CD8-positive, alpha-beta T cell (primary cell): ENCODE measurements at regions of chr2 and their contacts with region 1.

Region 1: GRCh38 chr2:227238238-227239237 is 74.1 kb downstream of the COL4A3 start:
- DNase-seq: peak; percentile 7 to 70 (median 56)
- ATAC-seq: no peak
- H3K4me3 ChIP-seq: no peak overlapping the region
- H3K4me3 Mint-ChIP-seq: no peak overlapping the region
- H3K27ac ChIP-seq: no peak overlapping the region
- H3K27ac Mint-ChIP-seq: no peak overlapping the region
- H3K4me1 ChIP-seq: no peaks in the 10 kb centered on the region
- H3K4me1 Mint-ChIP-seq: no peaks in the 10 kb centered on the region
- H3K27me3 ChIP-seq: no peaks in the 10 kb centered on the region
- H3K27me3 Mint-ChIP-seq: peaks cover 11% of the 10 kb centered on the region
- CTCF ChIP-seq: peak; percentile 98

Region 2: GRCh38 chr2:226215902-226216503 is 1022.5 kb before region 1 on chr2:
- CTCF ChIA-PET with region 1: interaction called, 3 read pairs
- POLR2A ChIA-PET with region 1: no interaction called
- intact Hi-C with region 1: loop called in 1 of 2 experiments (anchors 5 kb)
- DNase-seq: peak; percentile 22 to 62 (median 47)
- ATAC-seq: peak; percentile 62
- H3K4me3 ChIP-seq: no peak overlapping the region
- H3K4me3 Mint-ChIP-seq: no peak overlapping the region
- H3K27ac ChIP-seq: no peak overlapping the region
- H3K27ac Mint-ChIP-seq: no peak overlapping the region
- H3K4me1 ChIP-seq: no peaks in the 10 kb centered on the region
- H3K4me1 Mint-ChIP-seq: no peaks in the 10 kb centered on the region
- H3K27me3 ChIP-seq: no peaks in the 10 kb centered on the region
- H3K27me3 Mint-ChIP-seq: peaks cover 3% of the 10 kb centered on the region
- CTCF ChIP-seq: peak; percentile 53

Region 3: DNA sequence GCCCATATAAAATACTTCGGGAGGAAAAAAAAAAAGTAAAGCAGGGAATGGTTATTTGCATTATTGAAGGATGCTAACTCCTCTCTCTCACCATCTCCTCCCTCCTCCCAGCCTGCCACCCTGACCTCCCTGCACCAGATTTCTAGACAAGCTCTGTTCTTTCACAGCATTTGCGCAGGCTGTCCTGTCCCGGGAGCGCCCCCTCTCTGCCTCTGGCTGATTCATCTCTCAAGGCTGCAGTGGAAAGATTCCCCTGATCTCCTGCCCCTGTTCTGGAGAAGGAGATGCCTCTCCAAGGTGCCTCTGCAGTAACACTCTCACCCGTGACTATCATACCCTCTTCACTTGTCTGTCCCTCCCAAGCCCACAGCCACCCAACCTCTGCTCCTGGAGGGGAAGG is 113.0 kb before region 1 on chr2:
- CTCF ChIA-PET with region 1: no interaction called
- POLR2A ChIA-PET with region 1: no interaction called
- intact Hi-C with region 1: loop called (anchors 2 to 5 kb)
- DNase-seq: no peak
- ATAC-seq: no peak
- H3K4me3 ChIP-seq: no peak overlapping the region
- H3K4me3 Mint-ChIP-seq: no peak overlapping the region
- H3K27ac ChIP-seq: no peak overlapping the region
- H3K27ac Mint-ChIP-seq: no peak overlapping the region
- H3K4me1 ChIP-seq: no peaks in the 10 kb centered on the region
- H3K4me1 Mint-ChIP-seq: no peaks in the 10 kb centered on the region
- H3K27me3 ChIP-seq: no peaks in the 10 kb centered on the region
- H3K27me3 Mint-ChIP-seq: peaks cover 16% of the 10 kb centered on the region
- CTCF ChIP-seq: no peak

Region 4: GRCh38 chr2:227228061-227228667 is 10.4 kb before region 1 on chr2:
- CTCF ChIA-PET with region 1: interaction called, 18 read pairs
- POLR2A ChIA-PET with region 1: no interaction called
- intact Hi-C with region 1: no loop called
- DNase-seq: no peak
- ATAC-seq: no peak
- H3K4me3 ChIP-seq: no peak overlapping the region
- H3K4me3 Mint-ChIP-seq: no peak overlapping the region
- H3K27ac ChIP-seq: no peak overlapping the region
- H3K27ac Mint-ChIP-seq: no peak overlapping the region
- H3K4me1 ChIP-seq: no peaks in the 10 kb centered on the region
- H3K4me1 Mint-ChIP-seq: no peaks in the 10 kb centered on the region
- H3K27me3 ChIP-seq: no peaks in the 10 kb centered on the region
- H3K27me3 Mint-ChIP-seq: peaks cover 24% of the 10 kb centered on the region
- CTCF ChIP-seq: no peak

Region 5: DNA sequence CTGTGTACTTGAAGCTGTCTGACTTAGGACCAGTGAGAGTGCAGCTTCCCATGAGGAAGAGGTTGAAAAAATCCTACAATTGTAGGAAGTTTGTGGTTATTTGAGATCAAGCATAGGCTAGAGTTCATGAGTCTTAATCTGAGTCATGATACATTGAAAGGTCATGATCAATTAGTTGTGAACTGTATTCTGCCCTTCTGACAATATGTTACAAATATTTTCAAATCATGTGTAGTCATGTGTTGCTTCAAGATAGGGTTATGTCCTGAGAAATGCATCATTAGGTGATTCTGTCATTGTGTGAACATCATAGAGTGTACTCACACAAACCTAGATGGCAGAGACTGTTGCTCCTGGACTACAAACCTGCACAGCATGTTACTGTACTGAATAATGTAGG is 18.1 kb after region 1 on chr2:
- CTCF ChIA-PET with region 1: interaction called, 46 read pairs
- POLR2A ChIA-PET with region 1: no interaction called
- intact Hi-C with region 1: no loop called
- DNase-seq: no peak
- ATAC-seq: no peak
- H3K4me3 ChIP-seq: no peak overlapping the region
- H3K4me3 Mint-ChIP-seq: no peak overlapping the region
- H3K27ac ChIP-seq: no peak overlapping the region
- H3K27ac Mint-ChIP-seq: no peak overlapping the region
- H3K4me1 ChIP-seq: no peaks in the 10 kb centered on the region
- H3K4me1 Mint-ChIP-seq: no peaks in the 10 kb centered on the region
- H3K27me3 ChIP-seq: no peaks in the 10 kb centered on the region
- H3K27me3 Mint-ChIP-seq: peaks cover 2% of the 10 kb centered on the region
- CTCF ChIP-seq: no peak

Region 6: DNA sequence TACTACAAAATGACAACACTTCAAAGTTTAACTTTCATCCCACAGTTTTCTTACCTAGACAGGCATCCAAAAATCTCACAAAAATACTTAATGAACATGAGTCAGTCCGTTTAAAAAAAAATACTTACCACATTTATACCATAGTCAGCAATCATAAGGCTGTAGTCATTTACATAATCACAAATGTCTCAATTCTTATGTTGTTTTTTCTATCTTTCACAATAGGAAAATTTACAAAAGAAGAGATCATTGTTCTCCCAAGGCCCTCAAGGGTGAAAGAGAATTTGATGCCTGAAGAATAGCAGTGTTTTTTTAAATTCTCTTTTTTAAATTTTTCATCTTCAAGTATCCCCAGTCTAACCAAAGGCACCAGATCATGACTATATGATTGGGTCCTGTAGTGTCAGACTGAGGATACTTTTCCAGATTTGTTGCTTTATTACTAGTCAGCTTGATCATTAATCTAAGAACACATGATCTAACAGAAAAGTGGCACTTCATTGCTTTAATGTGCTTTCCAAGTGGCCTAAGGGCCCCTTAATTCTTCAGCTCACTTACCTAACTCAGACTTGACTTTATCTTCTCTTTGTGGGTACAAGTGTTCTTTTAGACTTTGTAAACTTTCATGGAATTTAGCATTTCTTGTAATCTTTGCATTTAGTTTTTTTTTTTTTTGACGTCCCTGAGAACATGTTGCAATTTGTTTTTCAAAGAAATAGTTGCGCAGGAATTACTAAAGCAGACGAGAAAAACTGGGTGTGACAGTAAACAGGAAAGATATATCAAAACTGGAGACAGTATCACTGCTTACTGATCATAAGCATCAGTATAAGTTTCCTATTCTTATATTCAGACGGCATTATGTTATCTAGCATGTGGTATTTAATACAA is 432.9 kb after region 1 on chr2:
- CTCF ChIA-PET with region 1: no interaction called
- POLR2A ChIA-PET with region 1: no interaction called
- intact Hi-C with region 1: no loop called
- DNase-seq: no peak
- ATAC-seq: no peak
- H3K4me3 ChIP-seq: no peak overlapping the region
- H3K4me3 Mint-ChIP-seq: no peak overlapping the region
- H3K27ac ChIP-seq: no peak overlapping the region
- H3K27ac Mint-ChIP-seq: no peak overlapping the region
- H3K4me1 ChIP-seq: no peaks in the 10 kb centered on the region
- H3K4me1 Mint-ChIP-seq: no peaks in the 10 kb centered on the region
- H3K27me3 ChIP-seq: no peaks in the 10 kb centered on the region
- H3K27me3 Mint-ChIP-seq: peaks cover 14% of the 10 kb centered on the region
- CTCF ChIP-seq: no peak